Gastrocnemius medialis (tissue), 4 donors: ENCODE measurements at regions of chr9 and their contacts with region 1.

Region 1: GRCh38 chr9:130682490-130683121 is 11.0 kb upstream of the EXOSC2 start:
- DNase-seq: peak; percentile 54 to 68
- ATAC-seq: peak; percentile 53 to 68
- H3K4me3 ChIP-seq: peak overlapping the region; percentile 65 to 88 (median 66)
- H3K27ac ChIP-seq: peak overlapping the region in 2 of 4 donors; percentile 57 to 71
- H3K4me1 ChIP-seq: peaks cover 6 to 8% of the 10 kb centered on the region in 2 donors
- H3K27me3 ChIP-seq: no peaks in the 10 kb centered on the region
- CTCF ChIP-seq: peak; percentile 62 to 90 (median 78)
- POLR2A ChIP-seq: no peak

Region 2: DNA sequence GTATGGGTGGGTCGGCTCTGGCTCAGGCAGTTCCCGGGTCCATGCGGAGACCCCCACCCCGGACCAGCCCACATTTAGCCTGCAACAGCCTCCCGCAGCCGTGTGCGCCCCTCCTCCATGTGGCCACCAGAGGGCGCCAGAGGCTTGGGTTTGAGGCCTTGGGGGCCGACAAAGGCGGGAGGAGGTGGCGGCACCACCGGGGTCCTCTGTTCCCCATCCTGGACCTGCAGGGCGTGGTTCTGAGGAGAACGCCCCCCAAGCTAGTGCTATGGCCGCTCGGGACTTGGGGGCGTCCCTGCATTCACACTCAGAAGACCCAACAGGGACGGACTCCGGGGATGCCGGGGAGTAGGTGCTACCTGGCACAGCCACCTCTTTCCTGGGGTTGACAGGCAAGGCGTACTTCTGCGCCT is 221.4 kb before region 1 on chr9:
- in situ Hi-C with region 1: loop called (anchors 5 kb)
- intact Hi-C with region 1: loop called (anchors 1 kb)
- DNase-seq: peak in 1 of 2 donors; percentile 35
- ATAC-seq: peak in 1 of 2 donors; percentile 30
- H3K4me3 ChIP-seq: no peak overlapping the region
- H3K27ac ChIP-seq: no peak overlapping the region
- H3K4me1 ChIP-seq: no peaks in the 10 kb centered on the region
- H3K27me3 ChIP-seq: no peaks in the 10 kb centered on the region
- CTCF ChIP-seq: peak; percentile 70 to 95 (median 94)
- POLR2A ChIP-seq: no peak

Region 3: DNA sequence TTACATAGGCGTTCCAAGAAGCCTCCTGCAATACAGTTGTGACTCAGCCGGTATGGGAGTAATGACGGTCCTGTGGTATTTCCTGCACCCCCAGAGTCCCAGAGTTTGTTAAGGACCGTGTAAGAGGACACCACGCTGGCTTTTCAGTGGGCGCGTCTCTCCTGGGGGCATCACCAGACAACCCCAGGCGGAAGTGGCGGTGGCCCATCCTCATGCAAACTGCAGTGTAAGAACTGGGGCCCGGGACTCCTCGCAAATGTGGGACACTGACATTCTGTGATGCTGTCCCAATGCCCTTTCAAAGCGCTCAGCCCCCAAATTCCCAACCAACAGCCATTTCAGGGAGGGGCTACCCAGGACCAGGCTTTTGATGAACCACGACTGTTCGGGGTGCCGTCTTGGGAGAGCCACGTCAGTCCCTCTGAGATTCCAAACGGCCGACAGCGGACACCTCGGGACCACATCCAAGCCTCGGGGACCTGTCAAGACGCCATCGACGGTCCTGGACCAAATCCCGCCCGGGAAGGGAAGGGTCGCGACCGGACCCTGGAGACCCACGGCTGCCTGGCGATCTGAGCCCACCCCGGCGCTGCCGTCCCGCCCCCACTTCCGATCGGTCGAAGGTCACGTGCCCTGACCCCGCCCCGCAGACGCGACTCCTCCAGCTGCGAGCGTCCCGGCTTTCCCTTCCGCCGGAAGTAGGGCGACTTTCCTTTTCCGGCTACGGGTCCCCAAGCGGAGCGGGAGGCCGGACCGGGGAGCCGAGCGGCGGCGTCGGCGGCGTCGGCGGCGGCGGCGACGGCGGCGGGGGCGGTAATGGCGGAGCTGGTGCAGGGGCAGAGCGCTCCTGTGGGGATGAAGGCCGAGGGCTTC is 103.5 kb before region 1 on chr9 and contains the start of gene FUBP3:
- in situ Hi-C with region 1: no loop called
- intact Hi-C with region 1: loop called (anchors 2 kb)
- DNase-seq: peak; percentile 89 to 90
- ATAC-seq: peak; percentile 97 to 98
- H3K4me3 ChIP-seq: peak within 1 kb of the TSS; percentile 81 to 98 (median 94)
- H3K27ac ChIP-seq: peak within 1 kb of the TSS; percentile 87 to 94 (median 91)
- H3K4me1 ChIP-seq: peaks cover 21 to 32% of the 10 kb centered on the region in 2 donors
- H3K27me3 ChIP-seq: no peaks in the 10 kb centered on the region
- CTCF ChIP-seq: peak in 1 of 5 experiments; percentile 10
- POLR2A ChIP-seq: peak; percentile 78 to 96
- total RNA-seq, gene FUBP3: 10.4 to 75.1 (median 13.0) TPM